Aorta (tissue), 5 donors: ENCODE measurements at regions of chr15 and their contacts with region 1.

Region 1: DNA sequence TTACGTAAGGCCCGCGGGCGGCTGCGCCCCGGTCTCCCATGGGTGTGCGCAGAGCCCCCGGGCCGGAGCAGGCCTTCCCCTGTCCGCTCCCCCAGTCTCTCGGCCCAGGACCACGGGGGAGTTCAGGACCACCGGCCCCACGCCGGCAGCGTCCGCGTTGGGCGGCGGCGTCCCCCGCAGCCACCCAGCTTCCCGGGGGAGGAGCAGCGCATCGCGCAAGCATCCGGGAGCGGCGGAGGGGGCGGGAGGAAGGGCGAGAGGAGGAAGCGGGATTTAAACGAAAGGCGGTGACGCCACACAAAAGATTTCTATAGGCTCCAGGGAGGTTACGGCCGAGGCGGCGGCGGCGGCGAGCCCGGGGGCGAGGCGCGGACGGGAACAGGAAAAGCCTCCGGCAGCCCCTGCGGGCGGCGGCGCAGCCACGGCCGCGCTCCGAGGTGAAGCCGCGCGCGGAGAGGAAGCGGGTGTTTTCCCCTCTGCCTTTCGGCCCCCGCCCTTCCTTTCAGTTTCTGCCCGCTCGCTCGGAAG is at the start of gene TLNRD1:
- DNase-seq: peak; percentile 96
- ATAC-seq: peak; percentile 87
- H3K4me3 ChIP-seq: peak within 1 kb of the TSS; percentile 81 to 91
- H3K27ac ChIP-seq: peak within 1 kb of the TSS; percentile 28 to 91
- H3K4me1 ChIP-seq: peaks cover 0 to 5% of the 10 kb centered on the region in 2 donors
- H3K27me3 ChIP-seq: no peaks in the 10 kb centered on the region
- total RNA-seq, gene TLNRD1: 15.7 to 24.4 TPM

Region 2: DNA sequence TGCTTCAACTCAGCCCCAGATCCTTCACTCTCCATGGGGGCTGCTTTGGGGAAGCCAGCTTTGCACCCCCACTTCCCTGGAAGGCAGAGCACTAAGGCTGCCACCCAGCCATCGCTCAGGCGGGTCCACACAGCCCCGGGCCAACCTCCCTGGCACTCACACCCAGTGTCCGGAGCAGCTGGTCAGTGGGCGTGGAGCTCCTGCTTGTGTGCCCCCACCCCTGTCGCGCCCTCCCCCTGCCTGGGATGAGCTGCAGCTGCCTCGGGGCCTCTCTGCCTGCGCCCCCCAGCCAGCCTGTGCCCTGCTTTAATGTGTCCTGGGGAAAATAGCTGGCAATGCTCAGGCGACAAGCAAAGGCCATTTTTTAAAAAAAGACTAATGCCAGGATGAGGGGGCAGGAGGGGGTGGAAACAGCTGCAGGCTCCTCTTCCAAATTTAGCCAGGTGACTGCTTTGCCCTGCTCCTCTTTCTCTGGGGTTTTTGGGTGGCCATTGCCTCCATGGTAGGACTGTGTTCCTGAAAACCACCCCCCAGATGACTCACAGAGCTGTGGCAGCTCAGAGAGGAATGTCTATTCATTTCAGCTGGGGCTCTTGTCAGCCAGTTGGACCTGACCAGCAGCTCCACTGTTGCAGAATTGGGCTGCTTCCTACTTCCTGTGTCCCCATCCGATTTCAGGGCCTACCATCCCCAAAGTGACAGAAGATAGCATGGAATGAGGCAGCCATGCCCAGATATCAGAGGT is 156.5 kb before region 1 on chr15:
- intact Hi-C with region 1: no loop called
- DNase-seq: no peak
- ATAC-seq: no peak
- H3K4me3 ChIP-seq: no peak overlapping the region
- H3K27ac ChIP-seq: no peak overlapping the region
- H3K4me1 ChIP-seq: no peaks in the 10 kb centered on the region
- H3K27me3 ChIP-seq: no peaks in the 10 kb centered on the region

Region 3: DNA sequence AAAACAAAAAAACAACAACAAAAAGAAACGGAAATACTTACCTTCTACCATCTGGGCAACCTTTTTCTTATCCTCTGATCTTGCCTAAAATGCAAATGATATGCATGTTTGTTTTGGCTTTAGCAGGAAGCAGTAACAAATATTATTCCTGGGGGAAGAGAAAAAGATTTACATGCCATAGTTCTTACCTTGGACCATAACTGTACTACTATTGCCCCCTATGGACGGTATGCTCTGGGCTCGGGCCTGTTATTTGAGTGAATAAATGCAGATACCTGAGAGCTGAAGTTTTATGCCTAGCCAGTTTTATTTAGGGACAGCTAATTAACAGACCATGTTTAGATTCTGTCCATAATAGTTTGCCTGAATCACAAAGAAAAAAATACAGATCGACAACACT is 335.9 kb after region 1 on chr15:
- intact Hi-C with region 1: loop called in 1 of 2 experiments (anchors 10 kb)
- DNase-seq: no peak
- ATAC-seq: no peak
- H3K4me3 ChIP-seq: no peak overlapping the region
- H3K27ac ChIP-seq: no peak overlapping the region
- H3K4me1 ChIP-seq: peaks cover 0 to 4% of the 10 kb centered on the region in 2 donors
- H3K27me3 ChIP-seq: no peaks in the 10 kb centered on the region